Right ventricle myocardium inferior (tissue), 1 donor: ENCODE measurements at regions of chr12 and their contacts with region 1.

Region 1: GRCh38 chr12:94289461-94290312 is 141.3 kb downstream of the PLXNC1 start:
- DNase-seq: peak; percentile 70
- ATAC-seq: peak; percentile 71

Region 2: GRCh38 chr12:94258593-94258992 is 31.1 kb before region 1 on chr12:
- intact Hi-C with region 1: loop called (anchors 5 kb)
- DNase-seq: no peak
- ATAC-seq: no peak

Region 3: DNA sequence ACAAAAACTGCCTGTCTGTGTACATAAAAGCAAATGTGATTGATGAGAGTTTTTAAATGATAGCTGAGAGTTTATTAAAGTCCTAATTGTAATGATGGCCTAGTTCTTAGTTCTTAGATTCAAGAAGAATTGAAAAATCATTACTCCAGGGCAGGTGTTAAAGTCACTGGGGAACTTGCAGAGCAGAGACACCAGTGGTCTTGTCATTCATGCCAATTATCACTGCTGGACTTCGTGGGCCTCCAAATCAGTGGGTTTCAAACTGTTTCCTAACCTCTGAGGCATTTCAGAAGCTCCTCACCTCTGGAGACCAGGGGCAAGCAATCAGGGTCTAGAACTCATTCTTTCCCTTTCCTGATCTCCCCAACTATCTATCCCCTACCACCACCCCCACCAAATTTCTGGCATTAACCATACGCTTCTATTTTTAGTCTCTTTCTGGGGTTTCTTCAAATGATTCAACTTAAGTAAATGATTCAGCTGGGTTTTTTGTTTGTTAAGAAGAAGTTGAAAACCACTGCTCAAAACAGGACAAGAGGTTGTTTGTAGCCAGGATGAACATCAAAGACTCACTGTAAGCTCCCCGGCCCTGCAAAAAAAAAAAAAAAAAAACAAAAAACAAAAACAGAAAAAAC is 89.9 kb after region 1 on chr12:
- intact Hi-C with region 1: no loop called
- DNase-seq: no peak
- ATAC-seq: no peak

Region 4: DNA sequence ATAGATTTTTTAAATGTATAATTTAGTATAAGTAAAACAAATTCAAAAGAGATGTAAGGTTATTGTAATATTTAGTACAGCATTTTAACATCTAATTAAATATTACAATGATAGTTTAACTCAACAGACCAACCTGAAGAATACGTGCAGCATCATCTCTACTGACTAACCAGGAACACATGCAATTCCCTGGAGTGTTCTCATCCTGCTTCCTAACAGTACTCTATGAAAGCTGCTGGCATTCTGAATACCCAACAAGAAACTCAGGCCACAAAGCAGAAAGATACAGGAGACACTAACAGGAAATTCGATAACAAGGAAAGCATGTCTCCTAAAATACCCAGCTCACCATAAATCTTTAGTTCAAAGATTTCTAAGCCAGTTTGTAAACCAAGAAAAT is 111.6 kb after region 1 on chr12:
- intact Hi-C with region 1: no loop called
- DNase-seq: no peak
- ATAC-seq: no peak